PC-3 (cell line): ENCODE measurements at regions of chr4 and their contacts with region 1.

Region 1: DNA sequence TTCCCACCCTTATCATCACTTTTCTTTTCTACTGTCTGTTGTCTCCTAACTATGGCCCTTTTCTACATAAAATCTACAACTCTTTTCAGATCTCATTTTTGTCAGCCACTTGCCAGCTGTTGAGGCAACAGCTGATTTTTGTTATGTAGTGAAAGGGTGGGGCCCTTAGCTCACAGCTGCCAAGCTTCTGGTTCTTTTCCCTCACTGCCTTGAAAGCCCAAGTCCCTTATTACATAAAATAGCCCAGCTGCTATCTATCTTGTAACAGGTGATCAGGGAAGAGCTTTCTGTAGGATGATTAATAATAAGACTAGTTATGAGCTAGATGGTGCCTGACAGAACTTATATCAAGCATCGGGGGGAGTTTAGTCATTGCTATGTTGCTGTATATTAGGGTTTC is 45.9 kb downstream of the ADGRL3 start:
- DNase-seq: no peak
- ATAC-seq: no peak
- H3K4me3 ChIP-seq: no peak overlapping the region
- H3K27ac ChIP-seq: no peak overlapping the region
- H3K4me1 ChIP-seq: peaks cover 15% of the 10 kb centered on the region
- H3K27me3 ChIP-seq: no peaks in the 10 kb centered on the region
- CTCF ChIP-seq: no peak

Region 2: GRCh38 chr4:61160478-61160877 is 85.6 kb before region 1 on chr4:
- CTCF ChIA-PET with region 1: no interaction called
- POLR2A ChIA-PET with region 1: no interaction called
- intact Hi-C with region 1: no loop called
- DNase-seq: no peak
- ATAC-seq: no peak
- H3K4me3 ChIP-seq: no peak overlapping the region
- H3K27ac ChIP-seq: no peak overlapping the region
- H3K4me1 ChIP-seq: no peaks in the 10 kb centered on the region
- H3K27me3 ChIP-seq: no peaks in the 10 kb centered on the region
- CTCF ChIP-seq: no peak

Region 3: DNA sequence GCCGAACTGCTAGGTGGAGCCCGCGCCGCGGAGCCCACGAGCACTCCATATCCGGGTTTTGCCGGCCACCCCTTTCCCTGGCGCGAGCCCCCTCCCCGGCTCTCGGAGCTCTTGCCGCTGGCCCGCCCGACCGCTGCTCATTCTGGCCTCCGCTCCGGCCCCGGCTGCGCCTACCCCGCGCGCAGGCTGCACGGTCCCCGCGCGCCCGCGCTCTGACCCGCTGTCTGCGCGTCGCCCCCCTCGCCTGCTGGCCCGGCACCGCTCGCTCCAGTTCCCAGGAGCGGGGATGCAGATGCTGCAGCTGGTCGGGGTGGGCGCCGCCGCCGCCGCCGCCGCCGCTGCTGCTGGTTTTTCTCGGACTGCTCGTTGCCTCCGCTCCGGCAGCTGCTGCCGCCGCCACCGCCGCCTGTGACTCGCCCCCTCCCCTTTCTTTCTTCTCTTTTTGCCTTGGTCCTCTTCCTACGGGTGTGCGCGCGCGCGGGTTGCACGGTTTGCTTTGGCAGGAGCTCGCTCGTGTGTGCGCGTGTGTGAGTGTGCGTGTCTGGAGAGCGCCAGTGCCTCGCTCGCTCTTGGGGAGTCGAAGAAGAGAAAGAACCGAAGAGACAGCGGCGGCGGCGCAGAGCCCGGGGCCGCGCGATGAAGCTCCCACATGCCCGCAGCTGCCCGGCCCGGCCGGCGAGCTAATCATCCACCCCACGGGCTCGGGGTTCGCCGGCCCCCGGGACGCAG is 45.7 kb before region 1 on chr4 and contains the start of gene ADGRL3:
- CTCF ChIA-PET with region 1: no interaction called
- POLR2A ChIA-PET with region 1: no interaction called
- intact Hi-C with region 1: loop called (anchors 2 kb)
- DNase-seq: no peak
- ATAC-seq: no peak
- H3K4me3 ChIP-seq: peak within 1 kb of the TSS; percentile 65
- H3K27ac ChIP-seq: no peak within 1 kb of the TSS
- H3K4me1 ChIP-seq: peaks cover 26% of the 10 kb centered on the region
- H3K27me3 ChIP-seq: peaks cover 20% of the 10 kb centered on the region
- CTCF ChIP-seq: no peak
- total RNA-seq, gene ADGRL3: 0.66 and 0.69 TPM in 2 replicates

Region 4: GRCh38 chr4:61312526-61312925 is 66.5 kb after region 1 on chr4:
- CTCF ChIA-PET with region 1: no interaction called
- POLR2A ChIA-PET with region 1: no interaction called
- intact Hi-C with region 1: no loop called
- DNase-seq: peak; percentile 59
- ATAC-seq: no peak
- H3K4me3 ChIP-seq: no peak overlapping the region
- H3K27ac ChIP-seq: no peak overlapping the region
- H3K4me1 ChIP-seq: no peaks in the 10 kb centered on the region
- H3K27me3 ChIP-seq: no peaks in the 10 kb centered on the region
- CTCF ChIP-seq: no peak

Region 5: GRCh38 chr4:61500883-61501282 is 254.8 kb after region 1 on chr4:
- CTCF ChIA-PET with region 1: no interaction called
- POLR2A ChIA-PET with region 1: no interaction called
- intact Hi-C with region 1: loop called (anchors 10 kb)
- DNase-seq: peak; percentile 67
- ATAC-seq: peak; percentile 84
- H3K4me3 ChIP-seq: no peak overlapping the region
- H3K27ac ChIP-seq: no peak overlapping the region
- H3K4me1 ChIP-seq: peaks cover 7% of the 10 kb centered on the region; the same call in 1 of the 2 replicates
- H3K27me3 ChIP-seq: no peaks in the 10 kb centered on the region
- CTCF ChIP-seq: peak; percentile 78